Posterior vena cava (tissue), 2 donors: ENCODE measurements at regions of chr5 and their contacts with region 1.

Region 1: GRCh38 chr5:96247097-96247701 is 185.8 kb downstream of the PCSK1 start:
- DNase-seq: no peak

Region 2: DNA sequence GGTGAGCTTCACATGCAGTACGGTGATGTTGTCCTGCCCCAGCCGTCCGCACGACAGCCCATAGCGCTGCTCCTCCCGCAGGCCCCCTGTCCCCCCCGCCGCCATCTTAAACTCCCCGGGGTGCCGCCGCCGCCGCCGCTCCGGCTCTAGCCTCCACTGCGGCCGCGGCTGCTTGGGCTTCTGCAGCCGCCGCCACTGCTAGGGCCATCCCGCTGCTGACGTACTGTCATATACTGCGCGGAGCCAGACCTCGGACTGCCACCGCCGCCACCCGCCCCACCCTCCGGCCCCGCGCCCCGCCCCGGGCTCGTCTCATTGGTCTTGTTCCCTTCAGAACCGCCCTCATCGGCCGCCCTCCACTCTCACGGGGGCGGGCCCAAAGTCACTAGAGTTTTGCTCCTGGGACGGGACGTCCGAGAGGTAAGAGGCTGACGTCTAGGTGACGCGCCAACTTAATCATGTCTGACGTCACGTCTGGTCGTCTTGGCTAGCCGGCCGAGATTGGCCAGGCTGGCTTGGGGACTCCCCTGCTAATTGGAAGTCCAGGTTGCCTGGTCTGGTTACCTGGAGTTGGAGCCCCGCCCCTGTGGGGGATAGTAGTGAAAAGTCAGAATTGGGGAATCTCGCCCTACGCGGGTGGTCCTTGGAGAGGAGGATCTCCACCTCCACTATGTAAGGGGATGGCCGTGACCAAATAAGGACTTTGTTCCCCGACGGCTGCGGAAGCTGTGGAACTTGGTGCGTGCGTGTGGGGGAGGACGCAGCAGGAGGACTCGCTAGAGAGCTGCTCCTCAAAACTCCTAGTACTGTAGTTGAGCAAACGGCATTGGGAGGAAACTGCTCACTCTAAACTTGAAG is 285.4 kb before region 1 on chr5 and contains the start of gene ELL2:
- intact Hi-C with region 1: loop called in 1 of 2 experiments (anchors 5 kb)
- DNase-seq: peak; percentile 100
- total RNA-seq, gene ELL2: 69.8 to 135 TPM

Region 3: GRCh38 chr5:96259151-96259772 is 12.1 kb after region 1 on chr5:
- intact Hi-C with region 1: no loop called
- DNase-seq: no peak